Heart left ventricle (tissue), 16 donors: ENCODE measurements at regions of chr6 and their contacts with region 1.

Region 1: GRCh38 chr6:12844290-12845223 is 128.0 kb downstream of the PHACTR1 start:
- DNase-seq: no peak
- ATAC-seq: no peak
- H3K4me3 ChIP-seq: no peak overlapping the region
- H3K27ac ChIP-seq: no peak overlapping the region
- H3K4me1 ChIP-seq: no peaks in the 10 kb centered on the region
- H3K27me3 ChIP-seq: peaks cover 0 to 13% (median 0%) of the 10 kb centered on the region in 9 donors
- CTCF ChIP-seq: peak in 11 of 12 donors; percentile 31 to 63 (median 50)
- POLR2A ChIP-seq: no peak

Region 2: DNA sequence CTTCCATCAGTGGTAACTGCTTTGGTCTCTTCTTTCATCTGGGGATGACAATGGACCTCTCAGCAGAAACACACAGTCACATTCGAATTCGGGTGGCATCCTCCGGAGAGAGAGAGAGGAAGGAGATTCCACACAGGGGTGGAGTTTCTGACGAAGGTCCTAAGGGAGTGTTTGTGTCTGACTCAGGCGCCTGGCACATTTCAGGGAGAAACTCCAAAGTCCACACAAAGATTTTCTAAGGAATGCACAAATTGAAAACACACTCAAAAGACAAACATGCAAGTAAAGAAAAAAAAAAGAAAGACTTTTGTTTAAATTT is 548.3 kb before region 1 on chr6:
- intact Hi-C with region 1: loop called in 1 of 10 experiments (anchors 5 kb)
- DNase-seq: no peak
- ATAC-seq: peak in 1 of 4 donors; percentile 41
- H3K4me3 ChIP-seq: no peak overlapping the region
- H3K27ac ChIP-seq: no peak overlapping the region
- H3K4me1 ChIP-seq: peaks cover 0 to 17% (median 4%) of the 10 kb centered on the region in 12 donors
- H3K27me3 ChIP-seq: peaks cover 0 to 15% (median 4%) of the 10 kb centered on the region in 9 donors
- CTCF ChIP-seq: no peak
- POLR2A ChIP-seq: no peak

Region 3: DNA sequence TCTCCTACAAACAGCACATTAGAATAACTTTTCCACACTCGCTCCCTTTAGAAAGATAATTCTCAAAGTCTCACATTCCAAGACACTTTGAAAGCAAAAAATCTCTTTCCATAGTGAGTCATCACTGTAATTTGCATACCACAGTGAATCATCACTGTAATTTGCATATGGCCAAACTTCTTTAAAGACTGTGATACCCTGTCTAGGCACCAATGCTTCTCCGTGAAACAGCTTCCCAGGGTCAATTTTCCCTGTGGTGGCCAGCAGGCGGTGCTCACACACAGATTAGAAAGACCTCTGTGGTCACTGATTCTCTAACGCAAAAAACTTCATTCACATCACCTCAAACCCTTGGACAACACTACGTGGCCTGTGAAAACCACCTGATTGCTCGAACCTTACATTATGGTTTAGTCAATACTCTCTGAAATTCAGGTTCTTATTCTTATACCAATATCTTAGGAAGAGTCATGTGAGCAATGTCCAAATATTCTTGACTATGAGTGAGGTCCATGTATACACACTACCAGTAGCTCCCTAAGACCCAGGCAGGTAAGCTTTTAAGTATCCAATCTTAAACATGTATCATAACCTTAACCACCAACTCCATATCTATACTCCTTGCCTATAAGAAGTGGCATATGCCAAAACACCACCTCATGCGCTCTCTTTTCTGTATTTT is 206.5 kb before region 1 on chr6:
- intact Hi-C with region 1: loop called in 1 of 10 experiments (anchors 5 kb)
- DNase-seq: peak in 3 of 5 donors; percentile 20 to 30 (median 28)
- ATAC-seq: peak in 3 of 4 donors; percentile 42 to 74 (median 53)
- H3K4me3 ChIP-seq: no peak overlapping the region
- H3K27ac ChIP-seq: no peak overlapping the region
- H3K4me1 ChIP-seq: peaks cover 0 to 5% (median 0%) of the 10 kb centered on the region in 12 donors
- H3K27me3 ChIP-seq: no peaks in the 10 kb centered on the region
- CTCF ChIP-seq: peak; percentile 40 to 71 (median 57)
- POLR2A ChIP-seq: no peak

Region 4: GRCh38 chr6:12875051-12875450 is 30.5 kb after region 1 on chr6:
- intact Hi-C with region 1: no loop called
- DNase-seq: no peak
- ATAC-seq: no peak
- H3K4me3 ChIP-seq: no peak overlapping the region
- H3K27ac ChIP-seq: no peak overlapping the region
- H3K4me1 ChIP-seq: no peaks in the 10 kb centered on the region
- H3K27me3 ChIP-seq: peaks cover 0 to 23% (median 4%) of the 10 kb centered on the region in 9 donors
- CTCF ChIP-seq: no peak
- POLR2A ChIP-seq: no peak

Region 5: GRCh38 chr6:12916006-12916405 is 71.4 kb after region 1 on chr6:
- intact Hi-C with region 1: no loop called
- DNase-seq: no peak
- ATAC-seq: no peak
- H3K4me3 ChIP-seq: no peak overlapping the region
- H3K27ac ChIP-seq: no peak overlapping the region
- H3K4me1 ChIP-seq: peaks cover 0 to 6% (median 0%) of the 10 kb centered on the region in 12 donors
- H3K27me3 ChIP-seq: no peaks in the 10 kb centered on the region
- CTCF ChIP-seq: no peak
- POLR2A ChIP-seq: no peak

Region 6: DNA sequence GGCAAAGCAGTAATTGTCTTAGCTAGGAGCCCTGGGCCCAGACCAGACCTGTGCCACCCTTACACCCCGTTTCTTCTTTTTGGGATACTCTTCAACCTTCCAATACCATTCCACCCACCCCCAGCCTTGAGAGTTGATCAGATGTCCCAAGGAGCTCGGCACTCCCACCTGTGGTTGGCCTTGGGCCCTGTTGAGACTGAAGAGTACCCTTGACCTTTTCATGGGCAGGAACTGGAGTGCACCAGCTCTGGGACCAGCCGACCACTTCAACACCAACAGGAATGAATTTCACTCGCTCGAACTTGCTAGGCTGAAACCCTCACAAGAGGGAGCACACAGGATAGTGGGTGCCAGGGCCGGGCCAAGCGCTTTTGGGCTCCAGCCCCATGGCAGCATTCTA is 145.6 kb after region 1 on chr6:
- intact Hi-C with region 1: no loop called
- DNase-seq: no peak
- ATAC-seq: peak in 1 of 4 donors; percentile 27
- H3K4me3 ChIP-seq: no peak overlapping the region
- H3K27ac ChIP-seq: no peak overlapping the region
- H3K4me1 ChIP-seq: peaks cover 0 to 20% (median 2%) of the 10 kb centered on the region in 12 donors
- H3K27me3 ChIP-seq: no peaks in the 10 kb centered on the region
- CTCF ChIP-seq: no peak
- POLR2A ChIP-seq: no peak